ENCODE measurements at regions of chr5 and their contacts with region 1.

Region 1: GRCh38 chr5:25427233-25427632 is 782.5 kb upstream of the CDH10 start:
- DNase-seq: no peak
- H3K4me3 ChIP-seq: no peak overlapping the region
- H3K27ac ChIP-seq: no peak overlapping the region
- H3K4me1 ChIP-seq: no peaks in the 10 kb centered on the region
- H3K27me3 ChIP-seq: no peaks in the 10 kb centered on the region
- CTCF ChIP-seq: no peak

Region 2: DNA sequence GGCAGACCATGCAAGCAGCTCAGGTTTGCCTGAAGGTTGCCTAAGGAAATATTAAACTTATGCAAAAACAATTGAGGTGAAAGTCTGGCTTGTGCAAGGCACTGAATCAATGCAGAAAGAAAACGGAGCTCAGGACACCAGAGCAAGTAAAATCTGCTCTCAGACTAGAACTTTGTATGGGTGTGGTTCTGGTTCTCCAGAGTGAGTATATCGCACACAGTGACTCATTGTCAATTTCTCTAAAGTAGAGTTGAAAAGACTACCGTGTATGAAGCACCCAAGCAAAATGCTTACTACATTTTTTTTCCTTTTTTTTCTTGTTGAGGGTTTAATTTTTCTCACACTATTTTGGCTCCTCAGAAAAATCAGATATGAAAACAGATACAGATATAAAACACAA is 132.2 kb before region 1 on chr5:
- CTCF ChIA-PET with region 1: no interaction called
- POLR2A ChIA-PET with region 1: no interaction called
- intact Hi-C with region 1: loop called (anchors 10 kb)
- DNase-seq: peak in 1 of 2 experiments; percentile 17
- H3K4me3 ChIP-seq: no peak overlapping the region
- H3K27ac ChIP-seq: no peak overlapping the region
- H3K4me1 ChIP-seq: no peaks in the 10 kb centered on the region
- H3K27me3 ChIP-seq: no peaks in the 10 kb centered on the region
- CTCF ChIP-seq: no peak

Measured in PC-9 (cell line).